Posterior vena cava (tissue), 2 donors: ENCODE measurements at regions of chr2 and their contacts with region 1.

Region 1: DNA sequence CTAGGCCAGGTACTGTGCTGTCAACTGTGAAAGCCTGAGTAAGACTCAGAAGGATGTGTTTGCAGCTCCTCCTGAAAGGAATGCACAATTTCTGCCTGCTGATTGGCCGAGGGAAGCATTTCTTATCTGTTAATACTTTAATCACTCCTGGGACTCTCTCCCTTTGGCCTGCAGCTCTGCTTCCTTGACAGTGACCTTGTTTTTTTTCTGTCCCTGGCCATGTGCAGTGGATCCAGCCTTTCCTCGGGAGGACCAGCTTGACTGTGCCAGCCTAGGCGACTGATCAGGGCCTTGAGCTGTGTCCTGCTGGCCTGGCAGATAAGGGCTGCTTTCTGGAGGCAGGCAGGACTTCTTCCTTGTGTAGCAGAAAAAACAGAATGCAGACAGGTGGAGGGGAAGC is 10.0 kb downstream of the RNF144A start:
- DNase-seq: no peak

Region 2: GRCh38 chr2:6337472-6337820 is 589.7 kb before region 1 on chr2:
- intact Hi-C with region 1: no loop called
- DNase-seq: no peak

Region 3: DNA sequence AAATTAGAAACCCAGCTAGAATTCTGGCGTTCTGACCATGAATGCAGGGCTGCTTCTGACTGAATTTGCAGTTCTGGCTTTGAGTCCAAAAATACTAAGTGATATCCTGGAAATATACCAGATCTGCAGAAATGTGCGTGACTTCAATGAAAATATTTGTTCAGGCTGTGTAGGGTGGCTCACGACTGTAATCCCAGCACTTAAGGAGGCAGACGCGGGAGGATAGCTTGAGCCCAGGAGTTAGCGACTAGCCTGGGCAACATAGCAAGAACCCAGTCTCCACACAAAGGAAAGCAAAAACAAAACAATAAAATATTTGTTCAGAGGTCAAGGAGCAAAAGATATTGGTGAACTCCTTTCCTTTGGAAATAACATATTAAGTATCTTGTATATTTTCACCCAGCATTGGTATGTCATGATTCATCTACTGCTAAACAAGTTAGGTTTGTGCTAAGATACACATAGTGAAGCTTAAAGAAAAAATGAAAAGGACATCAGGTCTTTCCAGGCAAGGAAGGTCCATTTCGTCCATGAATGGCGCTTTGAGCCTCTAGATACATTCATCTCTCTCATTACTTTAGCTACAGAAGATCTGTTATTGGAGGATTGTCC is 300.7 kb before region 1 on chr2:
- intact Hi-C with region 1: no loop called
- DNase-seq: no peak

Region 4: GRCh38 chr2:6905668-6906067 is 21.5 kb before region 1 on chr2:
- intact Hi-C with region 1: loop called in 1 of 2 experiments (anchors 1 kb)
- DNase-seq: no peak

Region 5: GRCh38 chr2:6960659-6961058 is 33.5 kb after region 1 on chr2:
- intact Hi-C with region 1: no loop called
- DNase-seq: no peak

Region 6: GRCh38 chr2:8408560-8409460 is 1481.6 kb after region 1 on chr2:
- intact Hi-C with region 1: no loop called
- DNase-seq: no peak